Activated T-helper 2 cell treated with anti-CD3 and anti-CD28 coated beads, Interferon-gamma antibody, Interleukin-2, Interleukin-4, amounts not matched to agents 10 μg/mL and 5 μg/mL and 100 μg/mL, durations not matched to agents 14 hours and 24 hours and 36 hours (primary cell): ENCODE measurements at regions of chr13 and their contacts with region 1.

Region 1: GRCh38 chr13:94549232-94550061 is 46.5 kb downstream of the TGDS start:
- DNase-seq: peak; percentile 87
- H3K4me3 Mint-ChIP-seq: peak overlapping the region; percentile 77
- H3K27ac Mint-ChIP-seq: peak overlapping the region; percentile 95
- H3K4me1 Mint-ChIP-seq: peaks cover 12% of the 10 kb centered on the region
- H3K27me3 Mint-ChIP-seq: peaks cover 4% of the 10 kb centered on the region

Region 2: DNA sequence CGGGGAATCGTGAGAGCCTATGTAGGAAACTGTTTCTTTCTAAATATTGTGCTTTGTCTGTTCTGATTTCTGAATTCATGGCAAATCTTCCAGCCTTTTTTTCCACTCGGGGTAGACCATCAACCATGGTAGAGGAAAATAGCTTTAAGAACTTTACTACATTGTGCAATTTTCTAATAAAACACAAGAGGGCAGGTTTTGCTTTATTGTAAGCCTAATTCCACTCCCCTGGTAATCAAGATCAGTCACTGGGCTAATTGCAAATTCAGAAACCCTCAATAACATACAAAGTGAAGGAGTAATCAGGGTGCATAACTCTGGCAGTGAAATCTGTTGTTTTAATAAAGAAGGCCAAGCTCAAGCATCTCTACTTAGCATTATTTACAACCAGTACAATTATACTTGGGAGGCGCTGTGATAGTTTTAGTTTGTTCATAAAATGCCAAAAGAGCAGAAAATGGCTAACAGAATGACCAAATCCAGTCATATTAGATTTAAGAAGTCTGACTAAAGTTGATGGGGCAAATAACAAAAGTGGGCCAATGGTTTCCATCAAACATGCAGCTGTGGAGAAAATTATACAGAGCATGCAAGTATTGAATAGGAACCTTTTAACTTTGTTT is 113.7 kb before region 1 on chr13:
- intact Hi-C with region 1: loop called (anchors 2 kb)
- DNase-seq: no peak
- H3K4me3 Mint-ChIP-seq: no peak overlapping the region
- H3K27ac Mint-ChIP-seq: no peak overlapping the region
- H3K4me1 Mint-ChIP-seq: peaks cover 21% of the 10 kb centered on the region
- H3K27me3 Mint-ChIP-seq: no peaks in the 10 kb centered on the region

Region 3: DNA sequence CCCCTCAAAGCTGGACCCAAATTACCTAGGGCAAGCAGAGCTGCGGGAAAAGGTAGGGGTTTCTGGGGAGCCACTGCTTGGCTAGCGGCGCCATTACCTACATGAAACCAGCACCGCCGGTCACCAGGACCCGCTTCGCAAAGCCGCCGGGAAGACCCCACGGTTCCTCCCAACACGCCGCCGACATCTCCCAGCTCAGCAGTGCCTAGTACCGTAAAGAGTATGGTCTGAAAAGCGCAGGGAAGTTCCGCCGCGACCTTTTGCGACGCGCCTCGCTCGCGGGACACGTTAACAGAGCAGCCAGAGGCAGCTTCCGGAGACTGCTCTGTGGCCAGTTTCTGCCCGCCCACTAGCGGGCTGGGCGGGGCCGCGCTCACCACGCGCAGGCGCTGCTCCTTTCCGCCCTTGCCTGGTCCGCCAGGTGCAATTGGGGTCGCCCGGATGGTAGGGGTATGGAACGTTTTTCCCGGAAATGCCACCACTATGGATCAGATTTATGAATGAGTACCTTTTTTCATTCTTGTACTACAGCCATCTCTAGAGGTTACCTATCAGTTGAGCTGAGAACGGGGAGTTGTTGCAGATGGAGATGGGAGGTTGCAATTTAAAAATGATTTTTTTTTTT is 46.6 kb after region 1 on chr13 and contains the start of gene TGDS:
- intact Hi-C with region 1: loop called (anchors 1 kb)
- DNase-seq: peak; percentile 87
- H3K4me3 Mint-ChIP-seq: peak within 1 kb of the TSS; percentile 91
- H3K27ac Mint-ChIP-seq: peak within 1 kb of the TSS; percentile 97
- H3K4me1 Mint-ChIP-seq: peaks cover 32% of the 10 kb centered on the region
- H3K27me3 Mint-ChIP-seq: no peaks in the 10 kb centered on the region
- total RNA-seq, gene TGDS: 26.6 and 27.5 TPM in 2 replicates

Region 4: DNA sequence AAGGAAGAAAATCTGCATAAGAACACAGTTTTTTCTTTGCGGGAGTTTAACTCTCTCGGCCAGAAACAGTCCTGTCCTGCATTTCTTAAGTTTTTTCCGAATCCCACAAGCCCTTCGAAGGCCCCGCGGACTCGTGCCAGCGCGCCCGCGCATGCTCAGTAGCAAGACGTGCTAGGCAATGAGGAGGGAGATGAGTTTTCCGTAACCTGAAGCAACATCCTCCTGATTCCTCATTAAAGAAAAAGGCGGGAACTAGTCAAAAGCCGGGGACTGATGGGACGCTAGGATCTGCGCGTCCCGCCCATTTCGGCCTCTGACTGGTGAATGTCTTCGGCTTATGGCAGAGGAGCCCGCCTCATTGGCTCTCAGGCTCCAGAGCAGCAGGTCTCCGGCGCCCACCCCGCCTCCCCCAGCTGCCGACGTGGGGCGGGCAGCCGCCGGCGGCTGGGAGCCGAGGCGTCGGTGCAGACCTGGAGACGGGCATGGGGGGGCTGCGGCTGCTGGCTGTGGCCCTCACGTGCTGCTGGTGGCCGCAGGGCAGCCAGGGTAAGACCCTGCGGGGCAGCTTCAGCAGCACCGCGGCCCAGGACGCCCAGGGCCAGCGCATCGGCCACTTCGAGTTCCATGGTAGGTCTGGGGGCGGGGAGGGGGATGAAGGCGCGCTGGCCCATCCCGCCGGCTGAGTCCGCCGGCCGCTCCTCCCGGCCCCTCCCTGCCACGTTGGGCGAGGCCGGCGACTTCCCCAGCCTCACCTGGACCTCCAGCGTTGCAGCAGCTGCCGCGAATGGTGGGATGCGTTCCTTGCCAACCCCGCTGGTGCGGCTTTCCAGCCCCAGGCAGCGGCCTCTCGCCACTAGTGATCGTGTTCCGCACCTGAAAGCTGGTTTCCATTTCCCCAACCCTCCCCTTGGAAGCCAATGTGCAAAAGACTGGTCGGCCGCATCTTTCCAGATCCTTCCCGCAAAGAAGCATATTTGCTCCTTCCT is 52.3 kb after region 1 on chr13 and contains the start of gene GPR180:
- intact Hi-C with region 1: loop called (anchors 1 kb)
- DNase-seq: peak; percentile 89
- H3K4me3 Mint-ChIP-seq: peak within 1 kb of the TSS; percentile 79
- H3K27ac Mint-ChIP-seq: peak within 1 kb of the TSS; percentile 55
- H3K4me1 Mint-ChIP-seq: peaks cover 24% of the 10 kb centered on the region
- H3K27me3 Mint-ChIP-seq: no peaks in the 10 kb centered on the region
- total RNA-seq, gene GPR180: 9.2 and 9.4 TPM in 2 replicates

Region 5: DNA sequence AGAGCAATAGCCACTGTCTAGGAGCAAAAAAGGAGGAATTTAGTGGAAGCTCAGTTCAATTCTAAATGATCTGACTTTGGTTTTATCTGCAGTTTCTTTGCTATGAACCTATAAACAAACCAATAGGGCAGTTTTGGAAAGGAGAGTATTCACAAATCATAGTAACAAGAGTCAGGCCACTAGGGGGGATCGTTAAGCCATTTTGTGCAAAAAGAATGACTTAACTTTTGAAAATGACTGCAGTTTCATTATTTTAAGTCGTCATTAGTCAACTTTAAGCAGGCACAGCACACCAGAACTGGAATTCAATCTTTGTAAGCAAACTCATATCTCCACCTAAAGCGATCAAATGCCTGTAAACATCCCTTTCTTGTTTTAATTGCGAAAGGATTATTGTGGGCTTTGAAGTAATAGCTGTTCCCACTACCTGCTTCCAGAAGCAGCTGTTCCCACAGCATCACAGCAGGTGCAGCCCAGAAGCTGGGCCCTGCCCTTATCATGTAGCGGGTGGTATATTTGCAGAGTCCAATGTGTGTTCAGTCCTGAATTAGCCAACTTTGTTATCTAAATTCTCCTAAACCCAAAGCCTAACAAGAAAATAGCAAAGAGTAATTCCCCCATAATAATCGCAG is 111.4 kb after region 1 on chr13:
- intact Hi-C with region 1: loop called (anchors 5 kb)
- DNase-seq: no peak
- H3K4me3 Mint-ChIP-seq: no peak overlapping the region
- H3K27ac Mint-ChIP-seq: no peak overlapping the region
- H3K4me1 Mint-ChIP-seq: peaks cover 37% of the 10 kb centered on the region
- H3K27me3 Mint-ChIP-seq: peaks cover 13% of the 10 kb centered on the region